ENCODE measurements at regions of chr5 and their contacts with region 1.

Region 1: GRCh38 chr5:154947778-154948177 is 6.9 kb downstream of the MRPL22 start:
- DNase-seq: no peak
- ATAC-seq: no peak
- H3K4me3 ChIP-seq: no peak overlapping the region
- H3K27ac ChIP-seq: no peak overlapping the region
- H3K4me1 ChIP-seq: no peaks in the 10 kb centered on the region; the same call in 1 of the 2 replicates
- H3K27me3 ChIP-seq: no peaks in the 10 kb centered on the region
- CTCF ChIP-seq: no peak

Region 2: GRCh38 chr5:154923441-154924430 is 24.0 kb before region 1 on chr5:
- CTCF ChIA-PET with region 1: interaction called, 11 read pairs
- POLR2A ChIA-PET with region 1: no interaction called
- in situ Hi-C with region 1: no loop called
- intact Hi-C with region 1: no loop called
- DNase-seq: no peak
- ATAC-seq: no peak
- H3K4me3 ChIP-seq: no peak overlapping the region
- H3K27ac ChIP-seq: no peak overlapping the region
- H3K4me1 ChIP-seq: no peaks in the 10 kb centered on the region
- H3K27me3 ChIP-seq: no peaks in the 10 kb centered on the region
- CTCF ChIP-seq: no peak

Region 3: DNA sequence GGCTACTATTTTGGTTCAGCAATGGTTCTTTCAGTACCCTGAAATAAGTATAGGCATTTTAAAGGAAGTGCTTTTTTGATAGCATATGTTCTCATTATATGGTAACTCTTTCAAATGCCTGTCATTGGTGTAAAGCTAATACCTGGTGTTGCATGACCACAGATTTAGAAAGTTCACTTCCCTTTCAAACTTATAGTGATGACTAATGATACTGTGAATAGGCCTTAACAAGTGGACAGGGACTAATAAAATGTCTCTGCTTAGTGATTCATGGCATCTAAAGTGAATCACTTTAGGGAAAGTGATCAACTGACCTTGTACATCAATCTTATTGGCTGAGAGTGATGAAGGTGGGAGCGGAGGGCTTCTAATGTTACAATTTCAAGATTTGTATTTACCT is 14.7 kb after region 1 on chr5:
- CTCF ChIA-PET with region 1: no interaction called
- POLR2A ChIA-PET with region 1: no interaction called
- in situ Hi-C with region 1: no loop called
- intact Hi-C with region 1: no loop called
- DNase-seq: no peak
- ATAC-seq: no peak
- H3K4me3 ChIP-seq: no peak overlapping the region
- H3K27ac ChIP-seq: no peak overlapping the region
- H3K4me1 ChIP-seq: no peaks in the 10 kb centered on the region
- H3K27me3 ChIP-seq: no peaks in the 10 kb centered on the region
- CTCF ChIP-seq: no peak

Region 4: GRCh38 chr5:155027993-155028629 is 80.3 kb after region 1 on chr5:
- CTCF ChIA-PET with region 1: no interaction called
- POLR2A ChIA-PET with region 1: interaction called, 11 read pairs
- in situ Hi-C with region 1: no loop called
- intact Hi-C with region 1: no loop called
- DNase-seq: no peak
- ATAC-seq: peak; percentile 79
- H3K4me3 ChIP-seq: no peak overlapping the region
- H3K27ac ChIP-seq: no peak overlapping the region
- H3K4me1 ChIP-seq: no peaks in the 10 kb centered on the region
- H3K27me3 ChIP-seq: no peaks in the 10 kb centered on the region
- CTCF ChIP-seq: peak; percentile 52; the same call in 1 of the 2 replicates

Region 5: GRCh38 chr5:155049569-155050383 is 102.0 kb after region 1 on chr5:
- CTCF ChIA-PET with region 1: no interaction called
- POLR2A ChIA-PET with region 1: no interaction called
- in situ Hi-C with region 1: no loop called
- intact Hi-C with region 1: no loop called
- DNase-seq: no peak
- ATAC-seq: 0 out of 2 replicates have a peak, but pooled peaks have one; percentile 54
- H3K4me3 ChIP-seq: no peak overlapping the region
- H3K27ac ChIP-seq: no peak overlapping the region
- H3K4me1 ChIP-seq: no peaks in the 10 kb centered on the region
- H3K27me3 ChIP-seq: peaks cover 6% of the 10 kb centered on the region
- CTCF ChIP-seq: peak; percentile 53

Region 6: GRCh38 chr5:155631116-155631515 is 683.3 kb after region 1 on chr5:
- CTCF ChIA-PET with region 1: no interaction called
- POLR2A ChIA-PET with region 1: no interaction called
- in situ Hi-C with region 1: no loop called
- intact Hi-C with region 1: no loop called
- DNase-seq: no peak
- ATAC-seq: no peak
- H3K4me3 ChIP-seq: no peak overlapping the region
- H3K27ac ChIP-seq: no peak overlapping the region
- H3K4me1 ChIP-seq: no peaks in the 10 kb centered on the region
- H3K27me3 ChIP-seq: no peaks in the 10 kb centered on the region; the same call in 1 of the 2 replicates
- CTCF ChIP-seq: no peak

Measured in Panc1 (cell line).